GM12878 (cell line): ENCODE measurements at regions of chr11 and their contacts with region 1.

Region 1: GRCh38 chr11:46560300-46560991 is 33.4 kb downstream of the AMBRA1 start:
- DNase-seq: peak; percentile 33
- ATAC-seq: peak; percentile 86
- H3K4me3 ChIP-seq: peak overlapping the region; percentile 64
- H3K27ac ChIP-seq: peak overlapping the region; percentile 66
- H3K4me1 ChIP-seq: peaks cover 4% of the 10 kb centered on the region
- H3K27me3 ChIP-seq: no peaks in the 10 kb centered on the region
- CTCF ChIP-seq: no peak
- EP300 ChIP-seq: no peak
- POLR2A ChIP-seq: no peak
- RAD21 ChIP-seq: no peak

Region 2: GRCh38 chr11:46547579-46547978 is 12.9 kb before region 1 on chr11:
- CTCF ChIA-PET with region 1: interaction called, 3 read pairs
- POLR2A ChIA-PET with region 1: interaction called, 7 read pairs
- RAD21 ChIA-PET with region 1: interaction called, 4 read pairs
- SMC1A ChIA-PET with region 1: interaction called, 16 read pairs
- in situ Hi-C with region 1: no loop called
- intact Hi-C with region 1: no loop called
- DNase-seq: no peak
- ATAC-seq: no peak
- H3K4me3 ChIP-seq: no peak overlapping the region
- H3K27ac ChIP-seq: no peak overlapping the region
- H3K4me1 ChIP-seq: no peaks in the 10 kb centered on the region
- H3K27me3 ChIP-seq: no peaks in the 10 kb centered on the region
- CTCF ChIP-seq: no peak
- EP300 ChIP-seq: no peak
- POLR2A ChIP-seq: no peak
- RAD21 ChIP-seq: no peak

Region 3: DNA sequence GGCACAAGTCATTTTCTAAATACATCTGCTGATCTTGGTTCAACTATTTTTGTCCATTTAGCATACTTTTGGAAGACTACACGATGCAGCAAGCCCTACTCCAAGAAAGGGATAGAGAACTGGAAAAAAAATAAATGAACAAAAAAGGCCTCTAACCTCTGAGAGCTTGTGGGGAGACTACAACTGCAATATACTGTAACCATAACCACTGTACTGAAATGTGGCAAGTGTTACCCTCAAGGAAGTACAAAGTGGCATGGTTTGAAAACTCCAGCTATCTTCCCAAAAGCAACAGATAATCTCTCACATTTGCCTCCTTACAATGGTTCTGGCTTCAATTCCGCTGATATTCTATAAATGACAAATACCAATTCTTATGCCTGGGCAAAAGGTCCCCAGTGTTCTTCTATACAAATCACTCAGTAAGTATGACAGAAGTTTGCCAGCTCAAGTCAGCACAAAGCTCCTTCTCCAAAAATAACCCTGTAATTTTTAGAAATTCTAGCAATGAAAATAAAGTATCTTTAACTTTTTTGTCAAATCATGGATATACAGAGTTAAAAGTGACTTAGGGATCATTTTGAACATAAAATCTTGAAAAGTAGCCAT is 10.4 kb after region 1 on chr11:
- CTCF ChIA-PET with region 1: interaction called, 9 read pairs
- POLR2A ChIA-PET with region 1: interaction called, 4 read pairs
- RAD21 ChIA-PET with region 1: interaction called, 13 read pairs
- SMC1A ChIA-PET with region 1: interaction called, 30 read pairs
- in situ Hi-C with region 1: no loop called
- intact Hi-C with region 1: no loop called
- DNase-seq: no peak
- ATAC-seq: peak; percentile 48
- H3K4me3 ChIP-seq: no peak overlapping the region
- H3K27ac ChIP-seq: no peak overlapping the region
- H3K4me1 ChIP-seq: peaks cover 8% of the 10 kb centered on the region
- H3K27me3 ChIP-seq: no peaks in the 10 kb centered on the region
- CTCF ChIP-seq: no peak
- EP300 ChIP-seq: no peak
- POLR2A ChIP-seq: no peak
- RAD21 ChIP-seq: no peak

Region 4: GRCh38 chr11:46593550-46594373 is 33.3 kb after region 1 on chr11 and contains the start of gene AMBRA1:
- CTCF ChIA-PET with region 1: interaction called, 4 read pairs
- POLR2A ChIA-PET with region 1: interaction called, 8 read pairs
- RAD21 ChIA-PET with region 1: interaction called, 11 read pairs
- SMC1A ChIA-PET with region 1: interaction called, 18 read pairs
- in situ Hi-C with region 1: no loop called
- intact Hi-C with region 1: loop called (anchors 2 kb)
- DNase-seq: peak; percentile 90
- ATAC-seq: peak; percentile 90
- H3K4me3 ChIP-seq: peak within 1 kb of the TSS; percentile 92
- H3K27ac ChIP-seq: peak within 1 kb of the TSS; percentile 61
- H3K4me1 ChIP-seq: no peaks in the 10 kb centered on the region
- H3K27me3 ChIP-seq: no peaks in the 10 kb centered on the region
- CTCF ChIP-seq: no peak
- EP300 ChIP-seq: no peak; a peak in 1 of 4 replicates
- POLR2A ChIP-seq: peak; percentile 85
- RAD21 ChIP-seq: no peak
- polyA plus RNA-seq, gene AMBRA1: 0.57 to 0.58 TPM